B cell (primary cell): ENCODE measurements at regions of chrX and their contacts with region 1.

Region 1: DNA sequence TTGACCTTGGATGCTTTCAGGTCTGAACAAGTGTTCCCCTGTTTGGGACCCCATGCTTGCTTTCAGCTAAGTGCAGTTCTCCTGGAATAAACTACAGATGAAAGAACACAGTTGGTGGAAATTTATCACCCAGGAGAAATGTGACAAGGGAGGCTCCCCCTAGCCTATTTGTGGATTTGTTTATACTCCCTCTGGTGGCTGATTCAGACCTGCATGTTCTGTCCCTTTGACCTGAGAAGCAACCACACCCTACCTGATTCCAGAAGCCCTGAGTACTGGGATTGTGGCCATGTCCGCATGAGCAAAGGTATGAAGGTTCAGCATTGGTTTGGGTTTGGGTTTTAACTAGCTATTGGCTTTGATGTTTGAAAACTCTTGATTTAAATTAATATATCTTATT is 440.9 kb downstream of the MID1IP1 start:
- DNase-seq: peak; percentile 33
- ATAC-seq: no peak
- H3K4me3 ChIP-seq: no peak overlapping the region
- H3K4me3 Mint-ChIP-seq: no peak overlapping the region
- H3K27ac ChIP-seq: no peak overlapping the region
- H3K27ac Mint-ChIP-seq: no peak overlapping the region
- H3K4me1 ChIP-seq: peaks cover 4 to 6% of the 10 kb centered on the region in 2 donors
- H3K4me1 Mint-ChIP-seq: peaks cover 5% of the 10 kb centered on the region
- H3K27me3 ChIP-seq: no peaks in the 10 kb centered on the region
- H3K27me3 Mint-ChIP-seq: no peaks in the 10 kb centered on the region
- CTCF ChIP-seq: peak; percentile 48

Region 2: DNA sequence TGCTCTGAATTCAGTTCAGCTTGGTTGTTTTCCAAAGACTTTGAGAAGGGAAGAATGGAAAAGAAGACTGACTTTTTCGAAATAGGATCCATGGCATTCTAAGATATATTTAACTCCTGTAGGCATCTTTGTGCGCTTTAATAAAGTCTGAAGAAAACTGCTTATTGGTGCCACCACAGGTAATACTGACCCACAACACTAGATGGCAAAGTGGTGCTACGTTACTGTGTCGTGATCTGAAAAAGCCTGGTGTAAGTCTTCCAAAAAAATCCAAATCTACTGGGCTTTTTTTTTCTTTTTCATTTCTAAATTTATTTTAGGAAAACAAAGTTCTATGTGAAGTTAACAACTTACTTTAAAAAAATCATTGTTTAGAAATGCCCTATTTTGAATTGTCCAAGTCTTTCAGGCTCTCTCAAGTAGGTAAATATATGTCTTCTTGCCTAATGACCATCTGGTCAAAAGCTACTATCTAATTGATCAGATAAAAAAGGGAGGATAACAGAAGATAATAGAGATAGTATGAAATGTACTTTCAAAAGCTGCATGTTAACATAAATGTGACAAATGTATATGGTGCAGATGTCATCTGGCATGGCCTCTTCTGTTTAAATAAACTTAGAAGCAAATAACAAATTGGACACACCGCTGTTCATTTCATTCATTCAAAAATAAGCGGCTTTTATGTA is 487.9 kb before region 1 on chrX:
- CTCF ChIA-PET with region 1: interaction called, 5 read pairs
- POLR2A ChIA-PET with region 1: no interaction called
- intact Hi-C with region 1: loop called (anchors 2 kb)
- DNase-seq: peak; percentile 53
- ATAC-seq: peak; percentile 33
- H3K4me3 ChIP-seq: no peak overlapping the region
- H3K4me3 Mint-ChIP-seq: no peak overlapping the region
- H3K27ac ChIP-seq: no peak overlapping the region
- H3K27ac Mint-ChIP-seq: no peak overlapping the region
- H3K4me1 ChIP-seq: no peaks in the 10 kb centered on the region
- H3K4me1 Mint-ChIP-seq: no peaks in the 10 kb centered on the region
- H3K27me3 ChIP-seq: no peaks in the 10 kb centered on the region
- H3K27me3 Mint-ChIP-seq: peaks cover 9% of the 10 kb centered on the region
- CTCF ChIP-seq: peak; percentile 71

Region 3: GRCh38 chrX:38768079-38768478 is 474.1 kb before region 1 on chrX:
- CTCF ChIA-PET with region 1: interaction called, 10 read pairs
- POLR2A ChIA-PET with region 1: no interaction called
- intact Hi-C with region 1: loop called (anchors 2 kb)
- DNase-seq: peak; percentile 28
- ATAC-seq: no peak
- H3K4me3 ChIP-seq: no peak overlapping the region
- H3K4me3 Mint-ChIP-seq: no peak overlapping the region
- H3K27ac ChIP-seq: no peak overlapping the region
- H3K27ac Mint-ChIP-seq: no peak overlapping the region
- H3K4me1 ChIP-seq: no peaks in the 10 kb centered on the region
- H3K4me1 Mint-ChIP-seq: no peaks in the 10 kb centered on the region
- H3K27me3 ChIP-seq: no peaks in the 10 kb centered on the region
- H3K27me3 Mint-ChIP-seq: peaks cover 4% of the 10 kb centered on the region
- CTCF ChIP-seq: peak; percentile 53

Region 4: DNA sequence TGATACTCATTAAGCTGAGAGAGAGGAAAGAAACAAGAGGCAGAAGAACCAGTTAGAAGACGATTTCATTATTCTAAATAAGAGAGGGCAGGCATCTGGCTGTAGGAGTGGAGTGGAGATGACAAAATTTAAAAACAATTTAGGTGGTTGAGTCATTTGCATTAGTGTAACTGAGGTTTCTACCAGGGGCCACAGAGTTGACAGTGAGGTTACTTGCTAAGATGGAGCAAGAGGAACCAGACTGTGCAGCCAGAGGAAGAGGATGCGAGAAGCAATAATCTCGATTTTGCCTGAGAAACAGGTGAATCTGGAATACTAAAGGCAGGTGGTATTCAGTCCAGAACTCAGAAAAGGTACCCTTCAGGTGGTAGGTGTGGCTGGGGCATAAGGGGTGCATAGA is 51.0 kb after region 1 on chrX:
- CTCF ChIA-PET with region 1: no interaction called
- POLR2A ChIA-PET with region 1: no interaction called
- intact Hi-C with region 1: no loop called
- DNase-seq: no peak
- ATAC-seq: no peak
- H3K4me3 ChIP-seq: no peak overlapping the region
- H3K4me3 Mint-ChIP-seq: peak overlapping the region; percentile 66
- H3K27ac ChIP-seq: no peak overlapping the region
- H3K27ac Mint-ChIP-seq: no peak overlapping the region
- H3K4me1 ChIP-seq: peaks cover 14 to 21% of the 10 kb centered on the region in 2 donors
- H3K4me1 Mint-ChIP-seq: peaks cover 40% of the 10 kb centered on the region
- H3K27me3 ChIP-seq: no peaks in the 10 kb centered on the region
- H3K27me3 Mint-ChIP-seq: peaks cover 3% of the 10 kb centered on the region
- CTCF ChIP-seq: no peak